SK-N-SH (cell line): ENCODE measurements at regions of chr17 and their contacts with region 1.

Region 1: DNA sequence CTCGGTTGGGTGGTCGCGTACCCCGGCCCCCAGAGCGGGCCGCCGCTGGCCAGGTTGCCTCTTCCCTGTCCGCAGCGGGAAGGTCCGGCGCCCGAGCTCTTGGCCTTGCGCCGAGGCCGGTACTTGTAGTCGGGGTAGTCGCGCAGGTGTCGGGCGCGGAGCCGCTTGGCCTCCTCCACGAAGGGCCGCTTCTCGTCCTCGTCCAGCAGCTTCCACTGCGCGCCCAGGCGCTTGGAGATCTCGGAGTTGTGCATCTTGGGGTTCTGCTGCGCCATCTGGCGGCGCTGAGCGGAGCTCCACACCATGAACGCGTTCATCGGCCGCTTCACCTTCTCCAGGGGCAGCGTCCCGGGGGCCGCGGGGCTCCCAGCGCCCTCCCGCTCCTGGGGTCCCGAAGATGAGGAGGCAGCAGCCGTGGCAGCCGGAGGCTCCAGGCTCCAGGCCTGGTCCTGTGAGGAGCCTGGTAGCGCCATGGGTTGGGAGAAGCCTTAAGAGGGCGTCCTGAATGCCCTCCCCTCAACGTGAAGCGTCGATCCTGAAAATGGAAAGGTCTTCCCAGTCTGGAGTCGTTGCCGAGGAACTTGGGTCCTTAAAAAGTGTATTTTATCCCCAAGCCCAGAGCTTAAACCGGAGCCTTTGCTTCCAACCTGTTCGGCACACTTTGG is 558 bp downstream of the SOX15 start:
- DNase-seq: peak; percentile 91
- H3K4me3 ChIP-seq: peak overlapping the region in 1 of 2 experiments; percentile 3; a peak in 1 of 4 replicates
- H3K27ac ChIP-seq: peak overlapping the region in 1 of 2 experiments; percentile 21; a peak in 2 of 4 replicates
- H3K4me1 ChIP-seq: peaks cover 17 to 32% of the 10 kb centered on the region in 2 experiments
- H3K27me3 ChIP-seq: no peaks in the 10 kb centered on the region
- CTCF ChIP-seq: peak; percentile 83
- EP300 ChIP-seq: no peak
- RAD21 ChIP-seq: peak; percentile 61

Region 2: DNA sequence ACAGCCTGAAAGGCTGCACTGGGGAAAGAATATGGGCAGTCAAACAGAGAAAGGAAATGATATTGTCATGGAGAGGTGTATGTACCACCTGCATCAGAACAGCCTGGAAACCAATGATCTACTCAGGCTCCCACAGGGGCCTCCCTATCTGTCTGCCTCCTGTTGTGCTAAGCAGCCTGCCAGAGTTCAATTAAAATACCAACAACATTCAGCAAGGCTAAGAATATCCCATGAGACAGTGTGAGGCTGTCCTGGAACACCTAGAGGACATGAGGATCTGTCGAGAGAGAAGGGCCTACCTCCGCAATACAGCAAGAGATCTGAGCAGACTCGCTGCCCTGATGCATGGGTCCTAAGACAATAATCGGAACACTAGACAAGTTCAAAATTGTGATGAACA is 16.9 kb after region 1 on chr17:
- CTCF ChIA-PET with region 1: interaction called, 22 read pairs
- POLR2A ChIA-PET with region 1: no interaction called
- DNase-seq: no peak
- H3K4me3 ChIP-seq: no peak overlapping the region
- H3K27ac ChIP-seq: no peak overlapping the region
- H3K4me1 ChIP-seq: peaks cover 0 to 3% of the 10 kb centered on the region in 2 experiments; a peak in 2 of 4 replicates
- H3K27me3 ChIP-seq: no peaks in the 10 kb centered on the region
- CTCF ChIP-seq: no peak
- EP300 ChIP-seq: no peak
- RAD21 ChIP-seq: no peak